ENCODE measurements at regions of chr3 and their contacts with region 1.

Region 1: GRCh38 chr3:109678600-109678999 is 341.3 kb upstream of the DPPA4 start:
- DNase-seq: no peak
- H3K4me3 ChIP-seq: no peak overlapping the region
- H3K27ac ChIP-seq: no peak overlapping the region
- H3K4me1 ChIP-seq: no peaks in the 10 kb centered on the region
- H3K27me3 ChIP-seq: no peaks in the 10 kb centered on the region
- CTCF ChIP-seq: no peak
- EP300 ChIP-seq: no peak
- POLR2A ChIP-seq: no peak

Region 2: DNA sequence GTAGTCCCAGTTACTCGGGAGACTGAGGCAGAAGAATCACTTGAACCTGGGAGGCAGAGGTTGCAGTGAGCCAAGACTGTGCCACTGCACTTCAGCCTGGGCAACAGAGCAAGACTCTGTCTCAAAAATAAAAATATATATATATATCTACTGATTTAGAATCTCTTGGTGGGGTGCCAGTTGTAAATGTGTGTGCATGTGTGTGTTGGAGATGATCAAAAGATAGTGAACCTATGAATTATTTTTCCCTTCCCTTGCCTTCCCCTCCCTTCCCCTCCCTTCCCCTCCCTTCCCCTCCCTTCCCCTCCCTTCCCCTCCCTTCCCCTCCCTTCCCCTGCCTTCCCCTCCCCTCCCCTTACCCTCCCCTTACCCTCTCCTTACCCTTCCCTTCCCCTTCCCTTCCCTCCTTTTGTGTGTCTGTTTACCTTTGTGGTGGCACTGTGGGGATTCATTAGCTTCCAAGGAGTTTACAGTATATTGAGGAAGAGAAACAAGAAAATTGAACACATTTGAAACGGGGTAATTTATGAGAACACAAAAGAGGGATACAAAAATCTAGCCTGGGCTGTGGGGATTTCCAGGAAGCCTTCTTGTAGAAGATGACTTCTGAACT is 59.7 kb before region 1 on chr3:
- intact Hi-C with region 1: loop called (anchors 2 kb)
- DNase-seq: no peak
- H3K4me3 ChIP-seq: no peak overlapping the region
- H3K27ac ChIP-seq: no peak overlapping the region
- H3K4me1 ChIP-seq: no peaks in the 10 kb centered on the region
- H3K27me3 ChIP-seq: no peaks in the 10 kb centered on the region
- CTCF ChIP-seq: no peak
- EP300 ChIP-seq: no peak
- POLR2A ChIP-seq: no peak

Region 3: DNA sequence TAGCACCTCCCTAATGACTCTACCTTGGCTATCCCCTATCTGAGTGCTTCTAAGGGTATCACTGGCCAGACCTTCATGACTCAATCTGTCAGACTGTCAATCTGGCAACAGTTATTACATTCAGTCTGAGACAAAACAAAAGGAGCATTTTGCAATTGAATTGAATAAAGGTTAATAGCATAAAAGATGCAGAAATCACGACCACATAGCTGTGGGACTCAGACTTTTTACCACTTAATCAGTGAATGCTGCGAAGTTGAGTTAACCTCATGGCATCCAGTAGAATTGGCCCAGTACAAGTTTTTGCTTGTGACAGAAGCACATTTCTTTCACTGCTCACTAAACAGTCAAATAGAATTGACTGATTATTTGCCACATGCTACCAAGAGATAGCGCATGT is 139.5 kb after region 1 on chr3:
- intact Hi-C with region 1: no loop called
- DNase-seq: no peak
- H3K4me3 ChIP-seq: no peak overlapping the region
- H3K27ac ChIP-seq: no peak overlapping the region
- H3K4me1 ChIP-seq: peaks cover 0 to 7% (median 0%) of the 10 kb centered on the region in 4 donors
- H3K27me3 ChIP-seq: no peaks in the 10 kb centered on the region
- CTCF ChIP-seq: no peak
- EP300 ChIP-seq: no peak
- POLR2A ChIP-seq: no peak